Activated CD4-positive, alpha-beta T cell treated with anti-CD3 and anti-CD28 coated beads for 36 hours (primary cell): ENCODE measurements at regions of chr10 and their contacts with region 1.

Region 1: GRCh38 chr10:22606164-22606614 is 108.2 kb downstream of the PIP4K2A start:
- DNase-seq: peak; percentile 33
- ATAC-seq: peak; percentile 31
- H3K4me3 Mint-ChIP-seq: no peak overlapping the region
- H3K27ac Mint-ChIP-seq: peak overlapping the region; percentile 69
- H3K4me1 Mint-ChIP-seq: peaks cover 83% of the 10 kb centered on the region
- H3K27me3 Mint-ChIP-seq: no peaks in the 10 kb centered on the region

Region 2: GRCh38 chr10:21525367-21526183 is 1080.6 kb before region 1 on chr10 and contains the start of gene SKIDA1:
- CTCF ChIA-PET with region 1: no interaction called
- POLR2A ChIA-PET with region 1: no interaction called
- intact Hi-C with region 1: loop called in 1 of 2 experiments (anchors 10 kb)
- DNase-seq: peak; percentile 81
- ATAC-seq: peak; percentile 71
- H3K4me3 Mint-ChIP-seq: peak within 1 kb of the TSS; percentile 80
- H3K27ac Mint-ChIP-seq: peak within 1 kb of the TSS; percentile 96
- H3K4me1 Mint-ChIP-seq: peaks cover 24% of the 10 kb centered on the region
- H3K27me3 Mint-ChIP-seq: peaks cover 17% of the 10 kb centered on the region
- total RNA-seq, gene SKIDA1: 0.32 to 0.54 TPM

Region 3: DNA sequence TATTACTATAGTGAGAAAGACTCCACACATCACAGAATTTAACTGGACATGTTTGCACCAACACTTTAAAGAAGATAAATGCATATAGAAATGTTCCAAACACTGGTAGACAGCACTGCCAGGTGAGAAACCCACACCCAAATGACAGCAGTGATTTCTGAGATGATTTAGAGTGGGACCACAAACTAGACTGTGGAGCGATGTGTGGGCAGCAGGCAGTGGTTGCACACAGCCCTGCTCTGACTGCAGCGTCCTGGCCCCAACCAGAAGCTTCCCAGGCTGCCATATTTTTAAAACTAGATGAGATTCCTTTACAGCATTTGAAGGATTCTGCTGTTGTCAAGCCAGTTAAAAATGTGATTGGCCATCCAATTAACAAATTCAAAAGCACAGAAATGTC is 337.7 kb before region 1 on chr10:
- CTCF ChIA-PET with region 1: no interaction called
- POLR2A ChIA-PET with region 1: no interaction called
- intact Hi-C with region 1: no loop called
- DNase-seq: peak; percentile 37
- ATAC-seq: peak; percentile 64
- H3K4me3 Mint-ChIP-seq: no peak overlapping the region
- H3K27ac Mint-ChIP-seq: no peak overlapping the region
- H3K4me1 Mint-ChIP-seq: peaks cover 3% of the 10 kb centered on the region
- H3K27me3 Mint-ChIP-seq: peaks cover 16% of the 10 kb centered on the region

Region 4: GRCh38 chr10:22801785-22802184 is 195.6 kb after region 1 on chr10:
- CTCF ChIA-PET with region 1: no interaction called
- POLR2A ChIA-PET with region 1: no interaction called
- intact Hi-C with region 1: no loop called
- DNase-seq: no peak
- ATAC-seq: no peak
- H3K4me3 Mint-ChIP-seq: no peak overlapping the region
- H3K27ac Mint-ChIP-seq: no peak overlapping the region
- H3K4me1 Mint-ChIP-seq: no peaks in the 10 kb centered on the region
- H3K27me3 Mint-ChIP-seq: no peaks in the 10 kb centered on the region

Region 5: GRCh38 chr10:22875576-22875975 is 269.4 kb after region 1 on chr10:
- CTCF ChIA-PET with region 1: no interaction called
- POLR2A ChIA-PET with region 1: no interaction called
- intact Hi-C with region 1: no loop called
- DNase-seq: no peak
- ATAC-seq: no peak
- H3K4me3 Mint-ChIP-seq: no peak overlapping the region
- H3K27ac Mint-ChIP-seq: no peak overlapping the region
- H3K4me1 Mint-ChIP-seq: peaks cover 6% of the 10 kb centered on the region
- H3K27me3 Mint-ChIP-seq: no peaks in the 10 kb centered on the region

Region 6: GRCh38 chr10:22912763-22913384 is 306.7 kb after region 1 on chr10:
- CTCF ChIA-PET with region 1: no interaction called
- POLR2A ChIA-PET with region 1: no interaction called
- intact Hi-C with region 1: no loop called
- DNase-seq: no peak
- ATAC-seq: no peak
- H3K4me3 Mint-ChIP-seq: no peak overlapping the region
- H3K27ac Mint-ChIP-seq: no peak overlapping the region
- H3K4me1 Mint-ChIP-seq: peaks cover 6% of the 10 kb centered on the region
- H3K27me3 Mint-ChIP-seq: no peaks in the 10 kb centered on the region